ENCODE measurements at regions of chr17 and their contacts with region 1.

Region 1: GRCh38 chr17:57271821-57272220 is 15.5 kb downstream of the MSI2 start:
- DNase-seq: no peak
- ATAC-seq: no peak
- H3K4me3 ChIP-seq: no peak overlapping the region
- H3K27ac ChIP-seq: no peak overlapping the region
- H3K4me1 ChIP-seq: no peaks in the 10 kb centered on the region
- H3K27me3 ChIP-seq: no peaks in the 10 kb centered on the region
- CTCF ChIP-seq: no peak

Region 2: GRCh38 chr17:57284984-57285646 is 13.3 kb after region 1 on chr17:
- CTCF ChIA-PET with region 1: interaction called, 5 read pairs
- POLR2A ChIA-PET with region 1: interaction called, 12 read pairs
- intact Hi-C with region 1: no loop called
- DNase-seq: no peak
- ATAC-seq: no peak
- H3K4me3 ChIP-seq: no peak overlapping the region
- H3K27ac ChIP-seq: no peak overlapping the region
- H3K4me1 ChIP-seq: no peaks in the 10 kb centered on the region
- H3K27me3 ChIP-seq: no peaks in the 10 kb centered on the region
- CTCF ChIP-seq: no peak